Mammary epithelial cell (primary cell): ENCODE measurements at regions of chr1 and their contacts with region 1.

Region 1: DNA sequence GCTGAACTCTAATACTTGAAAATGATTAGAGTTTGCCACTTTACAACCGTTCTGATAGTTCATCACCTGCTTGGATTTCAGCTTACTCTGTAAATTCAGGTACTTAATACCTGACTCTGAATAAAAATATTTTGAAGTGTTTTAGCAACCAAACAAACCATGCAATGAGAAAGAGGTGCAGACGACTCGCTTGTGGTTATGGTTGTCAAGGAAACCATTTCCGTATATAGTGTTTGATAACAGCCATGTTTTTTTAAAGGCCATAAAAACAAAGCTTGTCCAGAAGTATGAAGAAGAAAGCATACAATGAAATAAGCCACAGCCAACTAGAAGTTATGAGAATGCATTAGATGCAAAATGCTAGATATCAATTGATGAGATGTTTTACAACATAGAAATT is 167.2 kb upstream of the HMCN1 start:
- DNase-seq: peak; percentile 92
- H3K4me3 ChIP-seq: no peak overlapping the region
- H3K27ac ChIP-seq: peak overlapping the region; percentile 91
- H3K4me1 ChIP-seq: peaks cover 64% of the 10 kb centered on the region
- H3K27me3 ChIP-seq: no peaks in the 10 kb centered on the region
- CTCF ChIP-seq: no peak

Region 2: DNA sequence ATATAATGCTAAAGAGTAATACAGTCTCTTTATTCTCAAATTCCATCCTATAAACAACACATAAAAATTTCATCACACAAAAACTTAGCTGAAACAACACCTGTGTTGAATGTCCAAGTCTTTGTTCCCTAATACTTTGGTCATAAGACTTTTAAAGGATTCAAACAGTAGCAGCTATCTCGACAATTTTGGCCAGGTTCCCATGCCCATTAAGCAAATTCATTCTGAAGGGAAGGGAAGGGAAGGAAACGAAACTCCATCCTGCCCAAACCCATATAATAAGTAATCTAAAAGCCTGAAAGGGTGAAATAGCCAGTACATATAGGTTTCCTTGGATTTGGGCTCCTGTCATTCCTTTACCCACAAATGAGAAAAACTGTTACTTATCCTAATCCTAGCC is 257.4 kb before region 1 on chr1:
- CTCF ChIA-PET with region 1: no interaction called
- dilution Hi-C with region 1: loop called (anchors 5 kb)
- in situ Hi-C with region 1: loop called in 1 of 2 experiments (anchors 25 kb)
- intact Hi-C with region 1: no loop called
- DNase-seq: no peak
- H3K4me3 ChIP-seq: no peak overlapping the region
- H3K27ac ChIP-seq: no peak overlapping the region
- H3K4me1 ChIP-seq: peaks cover 10% of the 10 kb centered on the region
- H3K27me3 ChIP-seq: no peaks in the 10 kb centered on the region
- CTCF ChIP-seq: no peak

Region 3: GRCh38 chr1:185439727-185440415 is 127.1 kb before region 1 on chr1:
- CTCF ChIA-PET with region 1: no interaction called
- dilution Hi-C with region 1: no loop called
- in situ Hi-C with region 1: no loop called
- intact Hi-C with region 1: loop called (anchors 5 kb)
- DNase-seq: peak; percentile 89
- H3K4me3 ChIP-seq: no peak overlapping the region
- H3K27ac ChIP-seq: peak overlapping the region; percentile 12
- H3K4me1 ChIP-seq: peaks cover 25% of the 10 kb centered on the region
- H3K27me3 ChIP-seq: no peaks in the 10 kb centered on the region
- CTCF ChIP-seq: no peak

Region 4: DNA sequence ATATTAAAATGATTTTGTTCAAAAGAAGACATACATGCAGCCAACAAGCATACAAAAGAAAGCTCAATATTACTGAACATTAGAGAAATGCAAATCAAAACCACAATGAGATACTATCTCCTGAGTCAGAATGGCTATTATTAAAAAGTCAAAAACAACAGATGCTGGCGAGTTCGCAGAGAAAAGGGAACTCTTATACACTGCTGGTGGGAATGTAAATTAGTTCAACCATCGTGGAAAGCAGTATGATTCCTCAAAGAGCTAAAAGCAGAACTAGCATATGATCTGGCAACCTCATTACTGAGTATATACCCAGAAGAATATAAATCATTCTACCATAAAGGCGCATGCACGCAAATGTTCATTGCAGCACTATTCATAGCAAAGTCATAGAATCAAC is 41.2 kb after region 1 on chr1:
- CTCF ChIA-PET with region 1: no interaction called
- dilution Hi-C with region 1: no loop called
- in situ Hi-C with region 1: no loop called
- intact Hi-C with region 1: no loop called
- DNase-seq: peak; percentile 21
- H3K4me3 ChIP-seq: no peak overlapping the region
- H3K27ac ChIP-seq: no peak overlapping the region
- H3K4me1 ChIP-seq: no peaks in the 10 kb centered on the region
- H3K27me3 ChIP-seq: no peaks in the 10 kb centered on the region
- CTCF ChIP-seq: no peak